ENCODE measurements at regions of chr13 and their contacts with region 1.

Region 1: DNA sequence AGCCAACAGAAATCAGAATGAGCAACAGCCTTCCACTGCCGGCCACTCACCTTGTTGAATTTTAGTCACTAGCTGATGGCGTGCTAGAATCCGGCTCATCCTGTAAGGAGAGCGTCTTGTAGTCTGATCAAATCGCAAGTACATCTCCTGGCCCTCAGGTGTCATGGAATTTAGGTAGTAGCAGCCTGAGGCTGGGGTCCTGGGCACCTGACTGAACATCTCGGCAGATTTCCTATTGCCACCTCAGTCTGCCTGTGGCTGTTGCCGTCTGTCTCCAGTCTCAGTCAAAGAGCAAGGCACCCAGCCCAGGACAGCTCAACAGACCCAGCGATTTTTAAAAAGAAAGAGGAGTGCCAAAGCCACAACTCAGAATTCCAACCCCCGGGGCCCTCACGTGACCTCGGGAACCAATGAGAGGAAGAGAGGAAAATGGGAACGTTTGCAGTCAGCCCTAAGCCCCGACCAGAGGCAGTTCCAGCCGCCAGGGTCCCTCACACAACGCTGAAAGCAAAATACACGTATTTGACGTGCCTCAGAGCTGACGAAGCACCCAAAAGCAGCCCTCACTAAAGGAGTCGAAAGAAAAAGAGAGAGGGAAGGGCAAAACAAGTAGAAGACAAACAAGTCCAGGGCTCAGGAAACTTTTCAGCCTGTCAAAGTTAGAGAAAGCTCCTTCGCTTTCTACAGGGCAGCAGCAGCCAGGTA is at the start of gene STARD13:
- DNase-seq: peak; percentile 95 to 96
- ATAC-seq: peak; percentile 96
- H3K4me3 ChIP-seq: peak within 1 kb of the TSS; percentile 85 to 100
- H3K27ac ChIP-seq: peak within 1 kb of the TSS; percentile 94 to 100
- H3K4me1 ChIP-seq: peaks cover 2 to 3% of the 10 kb centered on the region in 2 donors
- H3K27me3 ChIP-seq: no peaks in the 10 kb centered on the region
- total RNA-seq, gene STARD13: 62.4 to 85.5 TPM

Region 2: DNA sequence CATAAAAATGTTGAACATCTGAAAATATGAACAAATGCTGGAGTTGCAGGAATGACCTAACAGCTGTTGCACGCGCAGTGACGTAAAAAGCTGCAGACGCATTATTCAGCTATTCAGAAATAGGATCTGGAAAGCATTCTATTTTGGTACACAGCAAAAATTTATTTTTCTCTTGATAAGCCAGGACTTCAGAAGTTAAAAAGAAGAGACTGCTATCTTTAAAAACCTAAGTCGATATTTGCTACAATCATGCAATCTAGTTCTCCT is 36.9 kb after region 1 on chr13:
- intact Hi-C with region 1: loop called (anchors 5 kb)
- DNase-seq: peak; percentile 73 to 84
- ATAC-seq: peak; percentile 74
- H3K4me3 ChIP-seq: peak overlapping the region; percentile 17 to 82
- H3K27ac ChIP-seq: no peak overlapping the region
- H3K4me1 ChIP-seq: peaks cover 4 to 7% of the 10 kb centered on the region in 2 donors
- H3K27me3 ChIP-seq: no peaks in the 10 kb centered on the region

Region 3: DNA sequence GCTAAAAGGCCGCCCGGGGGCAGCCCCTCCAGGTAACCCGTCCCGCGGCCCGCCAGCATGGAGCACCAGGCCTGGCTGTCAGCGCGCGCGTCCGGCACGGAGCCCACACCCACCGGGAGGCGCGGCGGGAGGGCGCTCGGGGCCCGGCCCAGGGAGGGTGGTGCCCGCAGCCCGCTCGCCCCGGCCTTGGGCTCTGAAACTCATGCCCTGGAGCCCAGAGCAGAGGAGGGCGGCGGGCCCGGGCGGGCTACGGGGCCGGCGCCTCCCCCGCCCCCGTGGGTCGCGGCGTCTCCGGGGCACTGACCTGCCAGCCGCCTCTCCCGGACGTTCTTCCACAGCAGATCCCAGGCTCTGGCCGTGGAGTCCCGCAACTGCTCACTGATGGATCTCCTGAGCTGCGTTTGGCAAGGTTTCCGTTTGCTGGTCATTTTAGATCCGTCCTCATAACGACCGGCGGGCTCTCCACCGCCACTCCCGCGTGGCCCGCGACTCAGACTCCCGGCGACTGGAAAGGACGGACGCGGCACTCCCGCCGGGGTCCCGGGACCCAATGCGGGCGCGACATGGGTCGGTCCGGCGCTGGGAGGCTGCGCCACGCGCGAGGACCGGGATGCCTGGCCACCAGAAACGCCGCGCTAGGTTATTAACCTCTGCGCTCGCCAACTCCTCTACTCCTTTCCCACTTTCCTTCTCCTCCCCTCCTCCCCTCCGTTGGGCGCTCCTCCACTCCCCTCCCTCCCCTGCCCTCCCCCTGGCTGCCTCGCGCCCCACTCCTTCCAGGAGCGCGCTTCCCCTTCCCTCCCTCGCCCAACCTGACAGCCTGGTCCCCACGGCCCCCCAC is 64.6 kb after region 1 on chr13:
- intact Hi-C with region 1: loop called in 1 of 2 experiments (anchors 10 kb)
- DNase-seq: peak; percentile 81 to 89
- ATAC-seq: peak; percentile 85
- H3K4me3 ChIP-seq: peak overlapping the region; percentile 74 to 84
- H3K27ac ChIP-seq: peak overlapping the region; percentile 33 to 84
- H3K4me1 ChIP-seq: no peaks in the 10 kb centered on the region
- H3K27me3 ChIP-seq: no peaks in the 10 kb centered on the region

Region 4: DNA sequence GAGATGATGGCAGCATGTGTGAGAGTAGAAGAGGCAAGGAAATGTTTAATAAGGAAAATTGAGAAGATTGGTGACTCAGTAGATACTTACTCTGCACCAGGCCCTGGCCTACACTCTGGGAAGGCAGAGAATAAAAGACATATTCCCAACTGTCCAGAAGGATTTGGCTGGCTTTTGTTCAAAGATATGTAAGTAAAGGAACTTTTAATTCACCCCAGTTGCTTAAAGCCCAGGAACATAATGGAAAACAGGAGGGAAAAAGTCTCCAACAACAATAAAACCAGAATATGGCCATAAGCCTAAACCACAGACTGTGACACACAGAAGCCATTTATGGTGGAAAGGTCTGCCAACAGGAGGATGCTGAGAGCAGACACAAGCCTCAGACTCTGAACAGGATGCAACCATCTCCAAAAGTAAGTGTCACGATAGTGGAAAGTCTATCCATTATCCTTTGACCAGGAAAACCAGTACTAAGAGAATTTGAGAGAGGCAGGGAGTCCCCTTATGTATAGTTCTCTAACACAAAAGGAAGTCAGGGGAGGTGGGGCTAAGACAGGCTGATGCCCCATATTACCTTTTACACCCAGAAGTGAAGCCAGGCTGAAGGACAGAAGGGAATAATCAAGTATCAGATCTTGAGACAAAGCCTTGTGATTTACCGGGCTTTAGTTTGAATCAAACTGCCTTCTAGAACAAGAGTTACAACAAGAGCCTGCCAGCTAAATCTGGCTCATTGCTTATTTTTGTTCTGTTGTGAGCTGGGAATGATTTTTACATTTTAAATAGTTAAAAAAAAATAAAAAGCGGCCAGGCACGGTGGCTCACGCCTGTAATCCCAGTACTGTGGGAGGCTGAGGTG is 169.5 kb after region 1 on chr13:
- intact Hi-C with region 1: loop called in 1 of 2 experiments (anchors 10 kb)
- DNase-seq: no peak
- ATAC-seq: peak; percentile 58
- H3K4me3 ChIP-seq: no peak overlapping the region
- H3K27ac ChIP-seq: peak overlapping the region; percentile 83 to 87
- H3K4me1 ChIP-seq: peaks cover 7 to 12% of the 10 kb centered on the region in 2 donors
- H3K27me3 ChIP-seq: no peaks in the 10 kb centered on the region

Region 5: GRCh38 chr13:33494596-33495204 is 209.1 kb after region 1 on chr13:
- intact Hi-C with region 1: loop called in 1 of 2 experiments (anchors 10 kb)
- DNase-seq: peak in 1 of 2 donors; percentile 49
- ATAC-seq: peak; percentile 65
- H3K4me3 ChIP-seq: no peak overlapping the region
- H3K27ac ChIP-seq: no peak overlapping the region
- H3K4me1 ChIP-seq: peaks cover 5 to 13% of the 10 kb centered on the region in 2 donors
- H3K27me3 ChIP-seq: no peaks in the 10 kb centered on the region

Region 6: DNA sequence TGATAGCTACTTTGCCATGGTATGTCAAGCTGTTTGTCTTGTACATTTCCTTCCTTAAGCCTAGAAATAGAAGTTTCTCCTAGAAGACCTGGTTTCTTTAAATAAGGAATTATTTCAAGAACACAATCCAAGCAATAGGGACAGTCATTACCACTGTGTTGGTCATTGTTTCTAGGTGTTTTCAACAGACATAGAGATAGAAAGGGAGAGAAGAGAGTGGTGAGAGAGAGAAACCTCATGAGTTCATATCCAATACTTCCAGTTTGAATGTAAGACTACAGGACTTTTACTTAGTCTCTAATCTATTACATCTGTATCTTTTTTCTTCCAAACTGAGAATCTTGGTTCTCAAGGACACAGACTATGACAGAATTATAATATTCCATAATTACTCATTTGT is 245.9 kb after region 1 on chr13:
- intact Hi-C with region 1: loop called in 1 of 2 experiments (anchors 5 kb)
- DNase-seq: no peak
- ATAC-seq: no peak
- H3K4me3 ChIP-seq: no peak overlapping the region
- H3K27ac ChIP-seq: no peak overlapping the region
- H3K4me1 ChIP-seq: no peaks in the 10 kb centered on the region
- H3K27me3 ChIP-seq: no peaks in the 10 kb centered on the region

Measured in aorta (tissue), 5 donors.